ENCODE measurements at regions of chr12 and their contacts with region 1.

Region 1: DNA sequence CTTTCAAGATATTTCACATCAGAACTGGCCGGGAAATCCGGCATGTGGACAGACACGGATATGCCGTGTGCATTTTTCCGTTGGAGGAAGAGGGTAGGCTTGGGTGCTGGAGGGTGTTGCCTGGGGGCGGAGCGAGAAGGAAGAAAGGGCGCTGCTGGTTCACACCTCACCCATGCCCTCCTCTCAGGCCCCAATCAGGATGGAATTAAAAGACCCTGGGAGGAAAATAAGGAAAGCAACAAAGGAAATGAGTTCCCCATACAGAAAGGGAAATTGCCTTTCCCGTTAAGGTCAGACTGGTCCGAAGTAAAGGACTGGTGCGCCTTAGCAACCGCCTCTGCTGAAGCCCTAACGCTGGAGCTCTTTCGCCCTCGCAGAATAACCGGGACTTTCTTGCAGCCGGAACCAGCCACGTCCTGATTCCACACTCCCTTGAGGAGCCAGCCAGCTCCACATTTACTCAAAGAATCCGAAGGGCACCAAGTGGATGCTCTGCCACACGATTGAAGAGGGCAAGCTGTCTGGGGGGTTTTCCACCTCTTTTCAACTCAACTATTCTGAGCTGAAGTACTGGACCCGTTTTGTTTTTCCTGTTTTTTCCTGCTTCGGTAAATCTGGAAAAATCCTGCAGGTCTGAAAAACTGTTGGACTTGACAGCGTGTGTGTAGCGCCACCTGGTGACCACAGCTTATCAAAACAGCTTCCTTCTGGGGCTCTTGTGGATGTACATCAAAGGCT is 37.7 kb upstream of the BCL2L14 start:
- H3K4me3 ChIP-seq: 0 out of 2 replicates have a peak overlapping the region, but pooled peaks have one; percentile 17
- H3K27ac ChIP-seq: no peak overlapping the region
- H3K4me1 ChIP-seq: no peaks in the 10 kb centered on the region
- CTCF ChIP-seq: peak; percentile 71

Region 2: GRCh38 chr12:11553871-11554533 is 479.0 kb before region 1 on chr12:
- CTCF ChIA-PET with region 1: interaction called, 18 read pairs
- POLR2A ChIA-PET with region 1: no interaction called
- H3K4me3 ChIP-seq: no peak overlapping the region
- H3K27ac ChIP-seq: no peak overlapping the region
- H3K4me1 ChIP-seq: no peaks in the 10 kb centered on the region
- CTCF ChIP-seq: 0 out of 2 replicates have a peak, but pooled peaks have one; percentile 48

Region 3: GRCh38 chr12:11576104-11576503 is 456.9 kb before region 1 on chr12:
- CTCF ChIA-PET with region 1: interaction called, 161 read pairs
- POLR2A ChIA-PET with region 1: no interaction called
- H3K4me3 ChIP-seq: no peak overlapping the region
- H3K27ac ChIP-seq: no peak overlapping the region
- H3K4me1 ChIP-seq: no peaks in the 10 kb centered on the region
- CTCF ChIP-seq: no peak

Region 4: DNA sequence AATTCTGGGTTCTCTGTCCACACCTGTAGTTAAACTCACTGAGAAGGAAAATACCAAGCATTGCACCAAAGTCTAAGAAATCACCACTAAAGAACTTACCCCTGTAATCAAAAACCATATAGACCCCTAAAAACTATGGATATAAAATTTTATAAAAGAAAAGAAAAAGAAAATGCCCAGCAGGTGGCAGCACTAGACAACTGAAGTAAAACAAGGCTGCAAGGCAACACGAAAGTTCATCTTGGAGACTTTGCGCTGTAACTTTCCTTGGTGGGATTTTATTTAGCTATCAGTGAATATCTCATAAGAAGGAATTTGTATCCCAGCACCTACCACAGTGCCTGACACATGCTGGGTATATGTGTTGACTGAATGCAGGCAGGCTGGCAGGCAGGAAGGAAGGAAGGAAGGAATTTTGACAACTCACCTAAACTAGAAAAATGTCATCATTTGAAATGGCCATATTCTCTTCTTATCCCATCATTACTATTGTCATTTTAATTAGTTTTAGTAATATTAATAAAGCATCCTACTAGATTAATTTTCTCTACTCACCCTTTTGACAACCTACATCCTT is 451.8 kb before region 1 on chr12:
- CTCF ChIA-PET with region 1: interaction called, 161 read pairs
- POLR2A ChIA-PET with region 1: no interaction called
- H3K4me3 ChIP-seq: no peak overlapping the region
- H3K27ac ChIP-seq: no peak overlapping the region
- H3K4me1 ChIP-seq: no peaks in the 10 kb centered on the region
- CTCF ChIP-seq: 0 out of 2 replicates have a peak, but pooled peaks have one; percentile 15

Region 5: DNA sequence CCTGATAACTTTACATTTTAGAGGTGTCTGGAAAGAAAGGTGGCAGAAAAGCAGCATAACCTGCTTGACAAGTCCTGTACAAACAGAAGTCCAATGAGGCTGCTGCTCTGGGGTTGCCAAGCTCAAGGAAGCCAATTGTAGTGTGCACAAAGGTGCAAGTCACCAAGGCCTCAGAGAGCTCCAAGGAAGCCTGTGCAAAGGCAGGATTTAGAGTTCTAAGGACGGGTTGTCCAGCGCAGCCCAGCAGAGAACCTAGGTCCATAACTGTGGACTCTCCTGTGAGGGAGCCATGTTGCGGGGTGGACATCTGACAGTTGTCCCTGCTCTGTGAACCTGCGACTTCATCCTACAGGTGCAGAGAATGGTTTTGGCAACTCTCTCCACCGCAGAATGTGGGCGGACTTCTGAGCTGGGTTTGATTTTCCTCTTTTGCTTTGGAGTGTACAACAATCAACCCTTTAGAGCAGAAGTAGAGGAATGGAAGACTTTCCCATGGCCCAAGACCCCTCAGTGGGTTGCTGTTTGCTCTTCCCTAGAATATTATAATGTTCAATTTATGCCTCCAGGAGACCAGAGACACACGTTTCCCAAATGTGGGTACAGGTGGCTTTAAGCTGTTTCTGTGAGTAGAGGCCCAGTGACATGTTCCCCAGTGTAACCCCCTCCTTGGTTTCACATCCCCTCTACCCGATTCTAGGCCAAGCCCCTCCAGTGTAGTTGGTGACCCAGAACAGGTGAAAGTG is 302.6 kb before region 1 on chr12:
- CTCF ChIA-PET with region 1: interaction called, 12 read pairs
- POLR2A ChIA-PET with region 1: no interaction called
- H3K4me3 ChIP-seq: no peak overlapping the region
- H3K27ac ChIP-seq: no peak overlapping the region
- H3K4me1 ChIP-seq: no peaks in the 10 kb centered on the region
- CTCF ChIP-seq: no peak

Region 6: GRCh38 chr12:12008931-12009611 is 23.9 kb before region 1 on chr12:
- CTCF ChIA-PET with region 1: interaction called, 12 read pairs
- POLR2A ChIA-PET with region 1: no interaction called
- H3K4me3 ChIP-seq: no peak overlapping the region
- H3K27ac ChIP-seq: no peak overlapping the region
- H3K4me1 ChIP-seq: peaks cover 8% of the 10 kb centered on the region; the same call in 1 of the 2 replicates
- CTCF ChIP-seq: no peak

Region 7: GRCh38 chr12:12121061-12121460 is 88.0 kb after region 1 on chr12:
- CTCF ChIA-PET with region 1: no interaction called
- POLR2A ChIA-PET with region 1: no interaction called
- H3K4me3 ChIP-seq: no peak overlapping the region
- H3K27ac ChIP-seq: no peak overlapping the region
- H3K4me1 ChIP-seq: peaks cover 8% of the 10 kb centered on the region; the same call in 1 of the 2 replicates
- CTCF ChIP-seq: no peak

Region 8: DNA sequence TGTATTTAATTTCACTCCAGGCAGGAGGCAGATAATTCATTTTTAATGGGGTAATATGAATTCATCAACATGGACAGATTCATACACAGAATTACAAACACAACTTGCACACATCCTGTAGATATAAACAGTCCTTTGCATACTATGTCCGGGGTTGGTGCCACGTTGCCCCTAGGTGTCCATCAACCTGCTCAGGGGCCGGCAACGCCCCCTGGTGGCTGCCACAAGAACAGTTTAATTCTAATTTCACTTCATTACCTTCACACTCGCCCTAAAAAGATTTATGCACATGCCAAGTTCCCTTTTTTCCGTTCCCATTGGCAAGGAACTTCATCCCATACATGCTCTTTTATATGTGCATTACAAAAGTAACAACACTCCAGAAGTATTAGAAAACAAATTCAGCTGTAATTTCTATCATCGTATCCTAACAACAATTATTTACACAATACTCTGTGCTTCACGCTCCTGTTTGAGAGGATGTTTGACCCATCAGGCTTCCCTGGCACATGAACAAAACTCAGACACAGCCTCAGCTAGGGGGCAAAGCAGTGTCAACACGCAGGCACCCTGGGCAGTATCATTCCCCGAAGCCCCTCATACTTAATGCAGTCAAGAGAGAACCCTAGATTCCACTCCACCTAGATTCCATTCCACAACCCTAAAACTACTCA is 301.5 kb after region 1 on chr12:
- CTCF ChIA-PET with region 1: interaction called, 13 read pairs
- POLR2A ChIA-PET with region 1: no interaction called
- H3K4me3 ChIP-seq: no peak overlapping the region
- H3K27ac ChIP-seq: no peak overlapping the region; the same call in 1 of the 2 replicates
- H3K4me1 ChIP-seq: peaks cover 10% of the 10 kb centered on the region
- CTCF ChIP-seq: peak; percentile 78

Measured in HEK293 (cell line).